ENCODE measurements at regions of chr7 and their contacts with region 1.

Region 1: GRCh38 chr7:8190119-8190895 is 71.7 kb downstream of the ICA1 start:
- DNase-seq: peak; percentile 77
- ATAC-seq: peak; percentile 97
- H3K4me3 ChIP-seq: no peak overlapping the region
- H3K27ac ChIP-seq: peak overlapping the region; percentile 44; the same call in 1 of the 2 replicates
- H3K4me1 ChIP-seq: no peaks in the 10 kb centered on the region
- H3K27me3 ChIP-seq: no peaks in the 10 kb centered on the region
- CTCF ChIP-seq: peak; percentile 66 to 82 (median 81); a peak in 5 of 6 replicates
- EP300 ChIP-seq: no peak
- POLR2A ChIP-seq: no peak
- RAD21 ChIP-seq: peak; percentile 97

Region 2: GRCh38 chr7:7640221-7641128 is 549.8 kb before region 1 on chr7 and contains the start of gene UMAD1:
- CTCF ChIA-PET with region 1: interaction called, 6 read pairs
- POLR2A ChIA-PET with region 1: no interaction called
- RAD21 ChIA-PET with region 1: interaction called, 13 read pairs
- SMC1A ChIA-PET with region 1: interaction called, 4 read pairs
- in situ Hi-C with region 1: no loop called
- intact Hi-C with region 1: no loop called
- DNase-seq: peak; percentile 99
- ATAC-seq: peak; percentile 95
- H3K4me3 ChIP-seq: peak within 1 kb of the TSS; percentile 93
- H3K27ac ChIP-seq: peak within 1 kb of the TSS; percentile 79
- H3K4me1 ChIP-seq: no peaks in the 10 kb centered on the region
- H3K27me3 ChIP-seq: no peaks in the 10 kb centered on the region
- CTCF ChIP-seq: no peak
- EP300 ChIP-seq: 0 out of 4 replicates have a peak, but pooled peaks of 1 of the 2 experiments have one; percentile 15
- POLR2A ChIP-seq: peak; percentile 95
- RAD21 ChIP-seq: no peak
- polyA plus RNA-seq, gene UMAD1: 8.7 to 8.8 TPM

Region 3: GRCh38 chr7:7920481-7920880 is 269.8 kb before region 1 on chr7:
- CTCF ChIA-PET with region 1: interaction called, 15 read pairs
- POLR2A ChIA-PET with region 1: no interaction called
- RAD21 ChIA-PET with region 1: interaction called, 5 read pairs
- SMC1A ChIA-PET with region 1: interaction called, 12 read pairs
- in situ Hi-C with region 1: no loop called
- intact Hi-C with region 1: no loop called
- DNase-seq: peak; percentile 76
- ATAC-seq: peak; percentile 93
- H3K4me3 ChIP-seq: no peak overlapping the region; the same call in 1 of the 2 replicates
- H3K27ac ChIP-seq: no peak overlapping the region; the same call in 1 of the 2 replicates
- H3K4me1 ChIP-seq: peaks cover 50% of the 10 kb centered on the region
- H3K27me3 ChIP-seq: no peaks in the 10 kb centered on the region
- CTCF ChIP-seq: no peak
- EP300 ChIP-seq: peak; percentile 82 to 91; a peak in 2 of 4 replicates
- POLR2A ChIP-seq: no peak
- RAD21 ChIP-seq: peak; percentile 11; the same call in 1 of the 2 replicates

Region 4: GRCh38 chr7:8015100-8015748 is 175.1 kb before region 1 on chr7:
- CTCF ChIA-PET with region 1: interaction called, 9 read pairs
- POLR2A ChIA-PET with region 1: interaction called, 3 read pairs
- RAD21 ChIA-PET with region 1: interaction called, 13 read pairs
- SMC1A ChIA-PET with region 1: interaction called, 4 read pairs
- in situ Hi-C with region 1: no loop called
- intact Hi-C with region 1: no loop called
- DNase-seq: no peak
- ATAC-seq: no peak
- H3K4me3 ChIP-seq: no peak overlapping the region
- H3K27ac ChIP-seq: no peak overlapping the region
- H3K4me1 ChIP-seq: no peaks in the 10 kb centered on the region
- H3K27me3 ChIP-seq: no peaks in the 10 kb centered on the region
- CTCF ChIP-seq: no peak
- EP300 ChIP-seq: no peak
- POLR2A ChIP-seq: no peak
- RAD21 ChIP-seq: no peak

Region 5: DNA sequence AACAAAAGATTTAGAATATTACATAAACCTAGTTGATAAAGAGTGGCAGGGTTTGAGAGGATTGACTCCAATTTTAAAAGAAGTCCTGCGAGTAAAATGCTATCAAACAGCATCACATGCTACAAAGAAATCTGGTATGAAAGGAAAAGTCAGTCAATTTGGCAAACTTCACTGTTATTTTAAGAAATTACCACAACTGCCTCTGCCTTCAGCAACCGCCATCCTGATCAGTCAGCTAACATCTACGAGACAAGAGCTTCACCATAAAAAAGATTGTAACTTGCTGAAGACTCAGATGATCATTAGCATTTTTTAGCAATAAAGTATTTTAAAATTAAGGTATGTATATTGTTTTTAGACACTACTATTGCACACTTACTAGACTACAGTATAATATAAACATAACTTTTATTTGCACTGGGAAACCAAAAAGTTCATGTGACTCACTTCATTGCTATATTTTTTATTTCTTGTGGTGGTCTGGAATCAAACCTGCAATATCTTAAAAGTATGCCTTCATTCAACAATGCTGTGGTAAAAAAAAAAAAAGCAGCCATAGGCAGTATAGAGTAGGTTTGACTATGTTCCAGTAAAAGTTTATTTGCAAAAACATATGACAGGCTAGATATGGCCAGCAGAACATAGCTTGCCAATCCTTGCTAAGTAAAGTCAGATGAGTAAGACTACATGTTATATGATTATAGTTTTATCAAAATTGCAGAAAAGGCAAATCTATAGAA is 147.3 kb before region 1 on chr7:
- CTCF ChIA-PET with region 1: interaction called, 3 read pairs
- POLR2A ChIA-PET with region 1: no interaction called
- RAD21 ChIA-PET with region 1: interaction called, 4 read pairs
- SMC1A ChIA-PET with region 1: interaction called, 23 read pairs
- in situ Hi-C with region 1: no loop called
- intact Hi-C with region 1: no loop called
- DNase-seq: no peak
- ATAC-seq: no peak
- H3K4me3 ChIP-seq: no peak overlapping the region
- H3K27ac ChIP-seq: no peak overlapping the region
- H3K4me1 ChIP-seq: no peaks in the 10 kb centered on the region
- H3K27me3 ChIP-seq: no peaks in the 10 kb centered on the region
- CTCF ChIP-seq: no peak
- EP300 ChIP-seq: no peak
- POLR2A ChIP-seq: no peak
- RAD21 ChIP-seq: no peak

Region 6: DNA sequence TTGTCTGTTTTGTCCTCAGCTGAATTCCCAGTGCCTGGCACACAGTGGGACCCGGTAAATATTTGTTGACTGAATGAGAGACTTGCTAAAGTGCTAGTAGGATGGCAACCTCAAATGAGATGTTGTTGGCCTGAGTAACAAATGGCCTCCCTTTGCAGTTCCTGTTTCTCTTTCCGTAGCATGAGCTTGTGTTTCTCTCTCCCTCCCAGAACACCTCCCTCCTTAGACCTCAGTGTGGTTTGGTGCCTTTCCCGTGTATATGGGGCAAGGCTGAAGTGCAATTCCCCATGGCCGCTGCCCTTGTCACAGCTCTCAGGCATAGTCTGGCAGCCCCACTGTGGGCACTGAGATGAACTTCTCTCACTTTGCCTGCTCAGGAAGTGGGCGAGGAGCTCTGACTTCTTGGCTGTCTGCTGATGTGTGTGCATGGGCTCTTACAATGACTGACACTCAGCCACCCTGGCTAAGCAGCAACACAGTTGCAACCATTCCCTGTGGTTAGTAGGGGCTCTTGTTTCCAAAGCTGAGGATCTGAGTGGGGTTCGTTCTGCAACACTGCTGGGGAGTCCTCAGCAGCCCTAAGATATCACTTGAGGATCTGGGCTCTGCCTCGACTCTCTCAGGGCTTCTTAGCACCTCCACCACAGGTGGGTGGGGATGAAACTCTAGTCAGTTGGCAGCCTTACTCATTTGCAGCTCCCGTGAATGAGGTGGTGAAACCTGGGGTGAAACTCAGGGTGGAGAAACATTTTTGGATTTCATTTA is 64.4 kb before region 1 on chr7:
- CTCF ChIA-PET with region 1: interaction called, 16 read pairs
- POLR2A ChIA-PET with region 1: interaction called, 10 read pairs
- RAD21 ChIA-PET with region 1: interaction called, 48 read pairs
- SMC1A ChIA-PET with region 1: interaction called, 113 read pairs
- in situ Hi-C with region 1: no loop called
- intact Hi-C with region 1: loop called (anchors 1 kb)
- DNase-seq: peak; percentile 95
- ATAC-seq: peak; percentile 80
- H3K4me3 ChIP-seq: no peak overlapping the region; the same call in 1 of the 2 replicates
- H3K27ac ChIP-seq: peak overlapping the region; percentile 90
- H3K4me1 ChIP-seq: peaks cover 68% of the 10 kb centered on the region
- H3K27me3 ChIP-seq: no peaks in the 10 kb centered on the region
- CTCF ChIP-seq: no peak
- EP300 ChIP-seq: peak; percentile 66 to 81
- POLR2A ChIP-seq: peak; percentile 74
- RAD21 ChIP-seq: peak; percentile 25

Region 7: GRCh38 chr7:8176370-8177081 is 13.8 kb before region 1 on chr7:
- CTCF ChIA-PET with region 1: interaction called, 41 read pairs
- POLR2A ChIA-PET with region 1: interaction called, 35 read pairs
- RAD21 ChIA-PET with region 1: interaction called, 64 read pairs
- SMC1A ChIA-PET with region 1: interaction called, 3 read pairs
- in situ Hi-C with region 1: no loop called
- intact Hi-C with region 1: no loop called
- DNase-seq: peak; percentile 96
- ATAC-seq: peak; percentile 82
- H3K4me3 ChIP-seq: peak overlapping the region; percentile 8
- H3K27ac ChIP-seq: peak overlapping the region; percentile 98
- H3K4me1 ChIP-seq: peaks cover 39% of the 10 kb centered on the region
- H3K27me3 ChIP-seq: no peaks in the 10 kb centered on the region
- CTCF ChIP-seq: no peak
- EP300 ChIP-seq: peak; percentile 22 to 52; a peak in 2 of 4 replicates
- POLR2A ChIP-seq: peak; percentile 62
- RAD21 ChIP-seq: 0 out of 2 replicates have a peak, but pooled peaks have one; percentile 3

Region 8: GRCh38 chr7:8365503-8366110 is 175.3 kb after region 1 on chr7:
- CTCF ChIA-PET with region 1: no interaction called
- POLR2A ChIA-PET with region 1: no interaction called
- RAD21 ChIA-PET with region 1: no interaction called
- SMC1A ChIA-PET with region 1: no interaction called
- in situ Hi-C with region 1: no loop called
- intact Hi-C with region 1: no loop called
- DNase-seq: no peak
- ATAC-seq: peak; percentile 82
- H3K4me3 ChIP-seq: no peak overlapping the region
- H3K27ac ChIP-seq: no peak overlapping the region
- H3K4me1 ChIP-seq: no peaks in the 10 kb centered on the region
- H3K27me3 ChIP-seq: no peaks in the 10 kb centered on the region
- CTCF ChIP-seq: peak; percentile 46 to 49 (median 47); a peak in 5 of 6 replicates
- EP300 ChIP-seq: no peak
- POLR2A ChIP-seq: no peak
- RAD21 ChIP-seq: peak; percentile 50

Region 9: DNA sequence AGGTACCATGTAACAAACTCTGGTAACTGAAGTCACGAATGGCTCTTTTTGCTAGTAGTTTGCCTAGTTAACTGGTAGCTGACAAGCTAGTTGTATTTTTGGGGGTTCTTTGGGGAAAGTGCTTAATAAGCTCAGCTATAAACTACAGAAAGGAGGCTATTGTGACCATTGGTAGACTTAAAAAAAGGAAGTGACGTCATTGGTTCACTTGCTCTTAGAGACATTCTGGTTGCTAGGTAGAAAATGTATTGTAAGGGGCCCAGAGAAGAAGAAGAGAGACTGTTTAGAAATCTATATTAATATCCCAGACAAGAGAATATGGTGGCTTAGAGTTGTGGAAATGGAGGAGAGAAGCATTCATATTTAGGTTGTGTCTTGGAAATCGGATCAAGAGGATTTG is 346.1 kb after region 1 on chr7:
- CTCF ChIA-PET with region 1: no interaction called
- POLR2A ChIA-PET with region 1: no interaction called
- RAD21 ChIA-PET with region 1: no interaction called
- SMC1A ChIA-PET with region 1: no interaction called
- in situ Hi-C with region 1: no loop called
- intact Hi-C with region 1: no loop called
- DNase-seq: no peak
- ATAC-seq: peak; percentile 73
- H3K4me3 ChIP-seq: no peak overlapping the region
- H3K27ac ChIP-seq: no peak overlapping the region
- H3K4me1 ChIP-seq: no peaks in the 10 kb centered on the region
- H3K27me3 ChIP-seq: no peaks in the 10 kb centered on the region
- CTCF ChIP-seq: no peak
- EP300 ChIP-seq: no peak
- POLR2A ChIP-seq: no peak
- RAD21 ChIP-seq: no peak